Astrocyte of the cerebellum (primary cell): ENCODE measurements at regions of chr12 and their contacts with region 1.

Region 1: DNA sequence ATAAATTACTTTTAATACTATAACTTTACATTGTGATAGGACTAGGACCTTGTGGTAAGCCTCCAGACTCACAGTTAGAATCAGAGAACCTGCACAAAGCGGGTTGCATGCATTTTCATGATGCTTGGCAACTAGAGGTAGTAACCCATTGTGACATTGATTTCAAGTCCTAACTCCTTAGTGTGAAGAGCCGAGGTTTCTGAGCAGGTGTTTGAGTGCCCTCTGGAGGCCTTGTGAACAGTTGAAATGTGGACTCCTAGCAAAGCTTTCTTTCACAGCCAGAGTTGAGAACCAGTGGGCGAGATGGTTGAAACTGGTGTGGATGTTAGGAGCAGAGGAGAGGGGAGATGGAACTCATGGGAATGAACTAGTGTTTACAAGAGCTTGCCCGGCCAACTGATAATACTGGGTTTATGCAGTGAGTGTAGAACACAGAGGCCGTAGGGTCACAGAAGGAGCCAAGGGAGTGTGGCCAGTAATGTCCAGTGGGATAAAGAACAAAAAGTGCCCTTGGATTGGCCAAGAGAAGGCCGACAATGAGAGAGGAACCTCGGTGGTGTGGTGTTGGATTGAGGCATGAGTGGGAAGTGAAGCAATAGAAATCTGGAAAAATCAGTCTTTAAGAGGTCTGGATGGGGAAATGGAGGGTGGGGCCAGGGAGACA is 10.9 kb downstream of the ZNF664 start:
- DNase-seq: peak; percentile 66
- H3K4me3 ChIP-seq: no peak overlapping the region
- CTCF ChIP-seq: peak; percentile 75

Region 2: GRCh38 chr12:123670882-123671728 is 312.8 kb before region 1 on chr12 and contains the start of gene TCTN2:
- in situ Hi-C with region 1: loop called (anchors 25 kb)
- DNase-seq: peak; percentile 79
- H3K4me3 ChIP-seq: peak within 1 kb of the TSS; percentile 73
- CTCF ChIP-seq: no peak

Region 3: DNA sequence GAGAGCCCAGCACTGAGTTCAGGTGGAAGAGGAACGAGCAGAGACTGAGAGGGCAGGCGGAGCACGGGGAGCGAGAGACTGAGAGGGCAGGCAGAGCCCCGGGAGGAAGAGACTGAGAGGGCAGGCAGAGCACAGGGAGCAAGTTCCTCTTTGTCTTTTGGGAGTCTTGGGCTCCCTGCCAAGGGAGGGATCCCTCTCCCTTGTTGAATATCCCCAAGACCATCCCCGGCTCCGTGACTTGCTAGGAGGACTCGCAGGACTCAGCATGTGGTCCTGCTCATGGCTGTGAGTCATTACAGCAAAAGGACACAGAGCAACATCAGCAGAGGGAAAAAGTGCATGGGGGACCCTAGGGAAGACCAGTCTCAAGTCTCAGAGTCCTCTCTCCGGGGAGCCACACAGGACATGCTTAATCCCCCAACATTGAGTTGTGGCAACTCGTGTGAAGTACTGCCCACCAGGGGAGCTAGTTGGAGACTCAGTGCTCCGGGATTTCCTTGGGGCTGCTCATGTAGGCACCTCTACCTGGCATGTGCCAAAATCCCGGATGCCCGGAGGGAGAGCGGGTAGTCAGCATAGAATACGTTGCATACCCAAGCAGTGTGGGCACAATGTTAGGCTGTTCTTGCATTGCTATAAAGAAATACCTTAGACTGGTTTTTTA is 92.3 kb before region 1 on chr12:
- in situ Hi-C with region 1: no loop called
- DNase-seq: no peak
- H3K4me3 ChIP-seq: no peak overlapping the region
- CTCF ChIP-seq: peak; percentile 9

Region 4: DNA sequence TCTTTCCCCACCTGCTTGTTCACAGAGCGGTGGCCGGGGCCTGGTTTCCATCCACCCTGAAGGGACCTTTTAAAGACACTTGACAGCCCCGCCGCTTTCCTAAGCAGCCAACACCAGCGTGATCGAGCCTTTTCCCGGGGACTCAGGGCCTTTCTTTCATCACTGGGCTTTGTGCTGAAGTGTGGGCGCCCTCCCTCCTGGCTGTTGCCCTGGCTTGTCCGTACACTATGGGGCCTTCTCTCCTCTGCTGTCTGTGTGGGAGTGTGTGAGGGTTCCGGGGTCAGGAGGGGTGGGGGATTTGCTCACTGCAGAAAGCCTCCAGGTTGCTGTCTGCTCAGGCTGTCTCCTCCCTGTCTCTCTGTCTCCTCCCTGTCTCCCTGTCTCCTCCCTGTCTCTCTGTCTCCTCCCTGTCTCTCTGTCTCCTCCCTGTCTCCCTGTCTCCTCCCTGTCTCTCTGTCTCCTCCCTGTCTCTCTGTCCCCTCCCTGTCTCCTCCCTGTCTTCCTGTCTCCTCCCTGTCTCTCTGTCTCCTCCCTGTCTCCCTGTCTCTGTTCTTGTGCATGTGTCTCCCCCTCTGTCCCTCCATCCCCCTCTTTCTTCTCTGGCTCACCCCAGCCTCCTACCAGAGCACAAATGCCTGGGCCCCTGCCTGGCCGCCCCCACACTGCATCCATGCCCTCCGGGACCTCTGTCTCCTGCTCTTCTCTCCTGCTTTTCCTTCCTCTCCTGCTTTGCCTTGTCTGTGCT is 76.1 kb before region 1 on chr12:
- in situ Hi-C with region 1: no loop called
- DNase-seq: no peak
- H3K4me3 ChIP-seq: no peak overlapping the region
- CTCF ChIP-seq: no peak